Left cardiac atrium (tissue), 4 donors: ENCODE measurements at regions of chr3 and their contacts with region 1.

Region 1: DNA sequence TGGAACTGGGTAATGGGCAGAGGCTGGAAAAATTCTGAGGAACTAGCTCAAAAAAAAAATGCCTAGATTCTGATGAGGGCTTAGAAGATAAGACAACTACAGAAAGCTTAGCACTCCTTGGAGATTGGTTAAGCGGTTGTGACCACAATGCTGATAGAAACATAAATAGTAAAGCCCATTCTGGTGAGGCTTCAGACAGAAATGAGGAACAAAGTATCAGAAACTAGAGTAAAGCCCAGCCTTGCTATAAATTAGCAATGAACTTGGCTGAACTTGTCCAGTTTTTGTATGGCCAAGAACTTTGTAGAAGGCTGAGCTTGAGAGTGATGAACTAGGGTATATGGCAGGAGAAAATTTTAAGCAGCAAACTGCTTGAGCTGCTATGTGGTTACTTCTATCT is 25.4 kb downstream of the GOLGB1 start:
- DNase-seq: no peak
- ATAC-seq: no peak

Region 2: GRCh38 chr3:121670676-121671075 is 53.5 kb before region 1 on chr3:
- intact Hi-C with region 1: loop called in 1 of 2 experiments (anchors 10 kb)
- DNase-seq: no peak
- ATAC-seq: peak in 1 of 2 donors; percentile 39

Region 3: DNA sequence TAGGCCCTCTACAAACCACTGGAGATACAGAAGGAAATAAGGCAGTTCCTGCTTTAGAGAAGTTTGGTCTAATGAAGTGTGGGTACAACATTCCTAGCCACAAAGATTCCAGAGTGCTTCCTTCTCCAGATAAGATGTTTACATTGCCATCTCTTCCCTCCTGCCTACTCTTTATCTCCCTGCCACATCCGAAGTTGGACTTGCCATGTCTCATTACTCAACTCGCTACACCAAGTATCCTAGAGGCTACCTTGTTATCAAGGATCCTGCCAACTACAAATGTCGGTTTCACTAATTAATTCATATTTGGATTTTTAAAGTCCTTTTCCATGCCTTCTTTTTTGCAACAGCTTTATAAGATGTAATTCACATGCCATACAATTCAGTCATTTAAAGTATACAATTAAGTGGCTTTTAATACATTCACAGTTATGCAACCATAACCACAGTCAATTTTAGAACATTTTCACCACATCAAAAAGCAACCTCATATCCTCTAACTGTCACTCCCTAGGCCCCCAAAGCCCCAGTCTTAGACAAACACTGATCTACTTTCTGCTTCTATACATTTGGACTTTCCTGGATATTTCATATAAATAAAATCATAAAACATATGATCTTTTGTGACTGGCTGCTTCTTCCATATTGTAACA is 547.2 kb after region 1 on chr3:
- intact Hi-C with region 1: no loop called
- DNase-seq: no peak
- ATAC-seq: no peak